Caco-2 (cell line): ENCODE measurements at regions of chr12 and their contacts with region 1.

Region 1: GRCh38 chr12:131290255-131290959 is 336.7 kb downstream of the ADGRD1 start:
- DNase-seq: peak in 1 of 2 experiments; percentile 14
- H3K4me3 ChIP-seq: no peak overlapping the region
- H3K4me3 Mint-ChIP-seq: no peak overlapping the region
- H3K27ac Mint-ChIP-seq: no peak overlapping the region
- H3K4me1 ChIP-seq: no peaks in the 10 kb centered on the region
- H3K4me1 Mint-ChIP-seq: no peaks in the 10 kb centered on the region
- H3K27me3 ChIP-seq: no peaks in the 10 kb centered on the region
- H3K27me3 Mint-ChIP-seq: peaks cover 8% of the 10 kb centered on the region
- CTCF ChIP-seq: no peak

Region 2: DNA sequence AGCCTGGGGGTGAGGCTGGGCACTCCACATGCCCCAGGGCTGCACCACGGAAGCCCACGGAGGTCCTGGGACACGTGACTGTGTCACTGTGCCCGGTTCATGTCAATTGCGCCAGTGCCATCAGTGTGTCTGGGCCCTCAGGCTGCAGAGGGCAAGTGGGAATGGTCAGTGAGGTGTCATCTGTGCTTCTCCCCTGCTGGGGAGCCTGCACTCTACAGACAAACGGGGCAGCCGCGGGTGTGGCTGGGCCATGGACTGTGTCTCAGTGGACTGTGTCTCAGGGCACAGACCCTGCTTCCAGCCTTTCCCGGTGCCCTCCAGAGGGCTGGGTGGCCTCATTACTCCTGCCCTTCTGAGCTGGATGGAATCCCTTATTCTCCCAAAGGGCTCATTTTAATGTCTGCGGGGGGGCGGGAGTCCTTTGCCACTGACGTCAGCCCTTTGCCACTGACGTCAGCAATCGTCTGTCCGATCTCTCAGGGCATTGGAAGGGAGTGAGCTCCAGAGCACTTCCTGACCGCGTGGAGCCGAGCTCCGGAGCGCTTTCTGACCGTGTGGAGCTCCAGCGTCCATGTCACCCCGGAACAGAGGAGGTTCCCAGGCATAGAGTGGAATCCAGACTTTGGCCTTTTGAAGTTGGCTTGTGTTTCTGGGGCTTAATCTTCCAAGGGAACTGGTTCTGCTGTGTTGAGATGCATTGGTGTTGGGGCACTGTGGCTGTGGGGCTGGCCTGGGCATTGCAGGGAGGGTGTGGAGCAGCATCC is 264.3 kb before region 1 on chr12:
- CTCF ChIA-PET with region 1: no interaction called
- POLR2A ChIA-PET with region 1: no interaction called
- intact Hi-C with region 1: no loop called
- DNase-seq: no peak
- H3K4me3 ChIP-seq: no peak overlapping the region
- H3K4me3 Mint-ChIP-seq: no peak overlapping the region
- H3K27ac Mint-ChIP-seq: no peak overlapping the region
- H3K4me1 ChIP-seq: no peaks in the 10 kb centered on the region
- H3K4me1 Mint-ChIP-seq: peaks cover 8% of the 10 kb centered on the region
- H3K27me3 ChIP-seq: no peaks in the 10 kb centered on the region
- H3K27me3 Mint-ChIP-seq: peaks cover 7% of the 10 kb centered on the region
- CTCF ChIP-seq: no peak

Region 3: DNA sequence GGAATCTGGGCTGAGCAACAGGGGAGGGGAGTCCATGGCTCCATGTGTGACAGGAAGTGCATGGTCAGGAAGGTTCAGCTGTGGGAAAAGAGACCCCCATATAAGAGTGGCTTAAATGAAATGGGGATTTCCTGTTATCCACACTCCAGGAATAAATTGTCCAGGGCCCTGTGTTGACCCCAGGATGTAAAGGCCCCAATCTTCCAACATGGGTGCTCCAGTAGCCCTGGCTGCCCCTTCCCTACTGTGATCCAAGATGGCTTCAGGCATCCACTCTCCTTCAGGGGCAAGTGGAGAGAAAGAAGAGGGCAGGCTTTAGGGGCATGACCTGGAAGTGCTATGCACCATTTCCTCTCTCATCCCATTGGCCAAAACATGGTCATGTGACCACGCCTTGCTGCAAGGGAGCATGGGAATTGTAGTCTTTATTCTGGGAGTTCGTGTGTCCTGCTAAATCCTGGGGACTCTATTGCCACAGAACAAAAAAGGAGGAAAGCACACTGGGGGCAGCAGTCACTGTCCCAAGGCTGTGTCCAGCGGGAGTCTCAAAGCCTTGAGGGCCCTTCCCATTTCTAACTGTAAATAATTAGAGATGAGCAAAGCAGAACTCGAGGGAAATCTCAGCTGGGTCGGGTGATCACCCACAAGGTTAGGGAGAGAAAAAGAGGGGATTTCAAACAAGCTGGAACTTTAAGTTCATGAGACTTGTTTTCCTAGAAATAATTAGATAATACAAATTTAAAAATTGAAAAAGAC is 47.5 kb before region 1 on chr12:
- CTCF ChIA-PET with region 1: no interaction called
- POLR2A ChIA-PET with region 1: no interaction called
- intact Hi-C with region 1: no loop called
- DNase-seq: peak; percentile 25 to 54
- H3K4me3 ChIP-seq: no peak overlapping the region
- H3K4me3 Mint-ChIP-seq: no peak overlapping the region
- H3K27ac Mint-ChIP-seq: no peak overlapping the region
- H3K4me1 ChIP-seq: no peaks in the 10 kb centered on the region
- H3K4me1 Mint-ChIP-seq: no peaks in the 10 kb centered on the region
- H3K27me3 ChIP-seq: no peaks in the 10 kb centered on the region
- H3K27me3 Mint-ChIP-seq: no peaks in the 10 kb centered on the region
- CTCF ChIP-seq: no peak

Region 4: GRCh38 chr12:131487388-131488124 is 197.1 kb after region 1 on chr12:
- CTCF ChIA-PET with region 1: no interaction called
- POLR2A ChIA-PET with region 1: no interaction called
- intact Hi-C with region 1: no loop called
- DNase-seq: no peak
- H3K4me3 ChIP-seq: no peak overlapping the region
- H3K4me3 Mint-ChIP-seq: no peak overlapping the region
- H3K27ac Mint-ChIP-seq: no peak overlapping the region
- H3K4me1 ChIP-seq: no peaks in the 10 kb centered on the region
- H3K4me1 Mint-ChIP-seq: no peaks in the 10 kb centered on the region
- H3K27me3 ChIP-seq: no peaks in the 10 kb centered on the region; the same call in none of the 2 replicates
- H3K27me3 Mint-ChIP-seq: peaks cover 20% of the 10 kb centered on the region
- CTCF ChIP-seq: no peak

Region 5: GRCh38 chr12:131673888-131674257 is 383.5 kb after region 1 on chr12:
- CTCF ChIA-PET with region 1: no interaction called
- POLR2A ChIA-PET with region 1: no interaction called
- intact Hi-C with region 1: loop called (anchors 10 kb)
- DNase-seq: no peak
- H3K4me3 ChIP-seq: no peak overlapping the region
- H3K4me3 Mint-ChIP-seq: no peak overlapping the region
- H3K27ac Mint-ChIP-seq: no peak overlapping the region
- H3K4me1 ChIP-seq: no peaks in the 10 kb centered on the region
- H3K4me1 Mint-ChIP-seq: no peaks in the 10 kb centered on the region
- H3K27me3 ChIP-seq: no peaks in the 10 kb centered on the region
- H3K27me3 Mint-ChIP-seq: peaks cover 27% of the 10 kb centered on the region
- CTCF ChIP-seq: no peak